ENCODE measurements at regions of chr1 and their contacts with region 1.

Region 1: DNA sequence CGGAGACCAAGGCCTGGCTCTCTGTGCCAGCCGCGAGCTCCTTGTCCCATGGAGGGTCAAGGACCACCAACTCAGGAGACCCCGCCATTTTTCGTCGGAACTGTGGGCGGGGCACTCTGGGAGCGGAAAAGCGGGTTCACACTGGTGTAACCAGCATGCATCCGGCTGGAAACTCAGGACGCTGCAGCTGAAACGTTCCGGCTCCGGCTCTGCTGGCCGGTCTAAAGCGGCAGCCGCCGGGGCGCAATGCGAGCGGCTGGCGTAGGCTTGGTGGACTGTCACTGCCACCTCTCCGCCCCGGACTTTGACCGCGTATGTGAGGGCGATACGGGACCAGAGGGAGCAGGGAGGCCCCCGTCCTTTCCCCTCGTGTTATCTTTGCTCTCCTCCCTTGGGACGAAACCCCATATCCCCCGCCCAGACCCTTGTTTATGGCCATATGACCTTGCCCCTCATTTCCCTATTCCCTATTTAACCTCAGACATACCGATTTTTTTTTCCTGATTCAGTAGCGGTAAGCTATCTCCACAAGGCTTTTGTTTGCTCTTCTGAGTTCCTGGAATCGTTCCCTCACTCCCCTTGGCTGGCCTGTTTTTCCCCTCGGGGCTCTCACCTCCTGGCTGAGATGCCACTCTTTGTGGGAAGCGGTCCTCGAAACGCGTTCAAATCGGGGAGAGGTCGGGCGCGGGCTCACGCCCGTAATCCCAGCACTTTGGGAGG is at the starts of genes NSL1 and TATDN3:
- DNase-seq: peak; percentile 98
- ATAC-seq: peak; percentile 73
- H3K4me3 Mint-ChIP-seq: peak within 1 kb of the TSS; percentile 99
- H3K27ac Mint-ChIP-seq: peak within 1 kb of the TSS; percentile 98
- H3K4me1 Mint-ChIP-seq: peaks cover 60% of the 10 kb centered on the region
- H3K27me3 Mint-ChIP-seq: no peaks in the 10 kb centered on the region
- CTCF ChIP-seq: no peak
- total RNA-seq, gene NSL1: 34.4 and 44.5 TPM in 2 replicates
- total RNA-seq, gene TATDN3: 30.3 and 31.4 TPM in 2 replicates

Region 2: GRCh38 chr1:212414328-212415106 is 377.3 kb before region 1 on chr1 and contains the start of gene PACC1:
- CTCF ChIA-PET with region 1: no interaction called
- POLR2A ChIA-PET with region 1: interaction called, 3 read pairs
- intact Hi-C with region 1: loop called (anchors 1 kb)
- DNase-seq: peak; percentile 93
- ATAC-seq: peak; percentile 98
- H3K4me3 Mint-ChIP-seq: peak within 1 kb of the TSS; percentile 100
- H3K27ac Mint-ChIP-seq: peak within 1 kb of the TSS; percentile 96
- H3K4me1 Mint-ChIP-seq: peaks cover 43% of the 10 kb centered on the region
- H3K27me3 Mint-ChIP-seq: no peaks in the 10 kb centered on the region
- CTCF ChIP-seq: no peak
- total RNA-seq, gene PACC1: 15.2 and 20.0 TPM in 2 replicates

Region 3: DNA sequence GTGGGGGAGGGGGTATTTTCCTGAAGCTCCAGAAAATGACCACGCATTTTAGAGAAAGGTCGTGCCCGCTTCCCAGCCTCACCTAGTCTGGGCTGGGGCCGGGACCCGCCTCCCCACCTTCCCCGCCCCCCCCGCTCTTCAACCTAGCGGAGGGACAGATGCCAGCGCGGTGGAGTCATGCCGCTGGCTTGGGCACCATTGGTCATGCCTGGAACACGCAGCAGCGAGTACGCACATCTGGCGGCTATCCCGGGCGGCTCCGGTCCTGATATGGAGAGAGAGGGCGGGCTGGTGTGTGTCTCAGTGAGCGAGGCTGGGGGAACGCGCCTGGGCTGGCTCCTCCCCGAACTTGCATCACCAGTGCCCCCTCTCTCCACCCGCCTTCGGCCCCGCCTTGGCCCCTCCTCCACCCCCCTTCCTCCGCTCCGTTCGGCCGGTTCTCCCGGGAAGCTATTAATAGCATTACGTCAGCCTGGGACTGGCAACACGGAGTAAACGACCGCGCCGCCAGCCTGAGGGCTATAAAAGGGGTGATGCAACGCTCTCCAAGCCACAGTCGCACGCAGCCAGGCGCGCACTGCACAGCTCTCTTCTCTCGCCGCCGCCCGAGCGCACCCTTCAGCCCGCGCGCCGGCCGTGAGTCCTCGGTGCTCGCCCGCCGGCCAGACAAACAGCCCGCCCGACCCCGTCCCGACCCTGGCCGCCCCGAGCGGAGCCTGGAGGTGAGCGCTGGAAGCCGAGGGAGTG is 183.5 kb before region 1 on chr1 and contains the start of gene ATF3:
- CTCF ChIA-PET with region 1: no interaction called
- POLR2A ChIA-PET with region 1: interaction called, 9 read pairs
- intact Hi-C with region 1: loop called (anchors 1 kb)
- DNase-seq: peak; percentile 76
- ATAC-seq: peak; percentile 84
- H3K4me3 Mint-ChIP-seq: peak within 1 kb of the TSS; percentile 95
- H3K27ac Mint-ChIP-seq: peak within 1 kb of the TSS; percentile 90
- H3K4me1 Mint-ChIP-seq: peaks cover 29% of the 10 kb centered on the region
- H3K27me3 Mint-ChIP-seq: peaks cover 32% of the 10 kb centered on the region
- CTCF ChIP-seq: no peak
- total RNA-seq, gene ATF3: 13.1 and 16.8 TPM in 2 replicates

Region 4: GRCh38 chr1:212699104-212699624 is 92.7 kb before region 1 on chr1:
- CTCF ChIA-PET with region 1: no interaction called
- POLR2A ChIA-PET with region 1: interaction called, 7 read pairs
- intact Hi-C with region 1: loop called (anchors 1 kb)
- DNase-seq: peak; percentile 56
- ATAC-seq: peak; percentile 55
- H3K4me3 Mint-ChIP-seq: peak overlapping the region; percentile 88
- H3K27ac Mint-ChIP-seq: peak overlapping the region; percentile 79
- H3K4me1 Mint-ChIP-seq: peaks cover 45% of the 10 kb centered on the region
- H3K27me3 Mint-ChIP-seq: peaks cover 11% of the 10 kb centered on the region
- CTCF ChIP-seq: no peak

Region 5: GRCh38 chr1:212827824-212828278 is 36.0 kb after region 1 on chr1:
- CTCF ChIA-PET with region 1: no interaction called
- POLR2A ChIA-PET with region 1: interaction called, 12 read pairs
- intact Hi-C with region 1: no loop called
- DNase-seq: no peak
- ATAC-seq: no peak
- H3K4me3 Mint-ChIP-seq: no peak overlapping the region
- H3K27ac Mint-ChIP-seq: no peak overlapping the region
- H3K4me1 Mint-ChIP-seq: peaks cover 8% of the 10 kb centered on the region
- H3K27me3 Mint-ChIP-seq: no peaks in the 10 kb centered on the region
- CTCF ChIP-seq: no peak

Region 6: DNA sequence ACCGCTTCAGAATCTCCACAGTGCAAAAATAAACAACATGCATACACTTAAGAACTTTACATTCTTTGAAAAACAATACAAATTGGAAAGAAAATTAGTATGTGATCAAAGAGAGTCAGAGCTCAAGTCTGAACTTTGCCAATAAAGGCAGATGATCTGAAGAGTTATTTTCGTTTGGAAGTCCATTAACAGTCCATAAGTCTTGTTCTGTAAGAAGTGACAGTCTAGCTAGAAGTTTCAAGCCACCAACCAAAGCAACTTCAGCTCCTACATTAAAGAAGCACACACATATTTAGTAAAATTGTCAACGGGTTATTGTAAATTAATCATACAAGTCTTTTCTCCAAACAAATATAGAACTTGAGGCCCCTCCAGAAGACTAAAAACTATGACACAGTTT is 203.1 kb after region 1 on chr1:
- CTCF ChIA-PET with region 1: interaction called, 4 read pairs
- POLR2A ChIA-PET with region 1: interaction called, 3 read pairs
- intact Hi-C with region 1: loop called (anchors 2 kb)
- DNase-seq: no peak
- ATAC-seq: no peak
- H3K4me3 Mint-ChIP-seq: no peak overlapping the region
- H3K27ac Mint-ChIP-seq: no peak overlapping the region
- H3K4me1 Mint-ChIP-seq: no peaks in the 10 kb centered on the region
- H3K27me3 Mint-ChIP-seq: no peaks in the 10 kb centered on the region
- CTCF ChIP-seq: no peak

Region 7: GRCh38 chr1:213051127-213051880 is 259.5 kb after region 1 on chr1 and contains the start of gene RPS6KC1:
- CTCF ChIA-PET with region 1: no interaction called
- POLR2A ChIA-PET with region 1: interaction called, 3 read pairs
- intact Hi-C with region 1: loop called (anchors 2 kb)
- DNase-seq: peak; percentile 73
- ATAC-seq: peak; percentile 93
- H3K4me3 Mint-ChIP-seq: peak within 1 kb of the TSS; percentile 97
- H3K27ac Mint-ChIP-seq: peak within 1 kb of the TSS; percentile 92
- H3K4me1 Mint-ChIP-seq: peaks cover 25% of the 10 kb centered on the region
- H3K27me3 Mint-ChIP-seq: peaks cover 20% of the 10 kb centered on the region
- CTCF ChIP-seq: no peak
- total RNA-seq, gene RPS6KC1: 12.9 and 13.0 TPM in 2 replicates

Region 8: GRCh38 chr1:213211201-213211600 is 419.4 kb after region 1 on chr1:
- CTCF ChIA-PET with region 1: no interaction called
- POLR2A ChIA-PET with region 1: no interaction called
- intact Hi-C with region 1: no loop called
- DNase-seq: no peak
- ATAC-seq: no peak
- H3K4me3 Mint-ChIP-seq: no peak overlapping the region
- H3K27ac Mint-ChIP-seq: no peak overlapping the region
- H3K4me1 Mint-ChIP-seq: no peaks in the 10 kb centered on the region
- H3K27me3 Mint-ChIP-seq: no peaks in the 10 kb centered on the region
- CTCF ChIP-seq: no peak

Measured in activated B cell treated with CpG ODN at 0.5 μM for 24 hours (primary cell).